ENCODE measurements at regions of chr19 and their contacts with region 1.

Region 1: DNA sequence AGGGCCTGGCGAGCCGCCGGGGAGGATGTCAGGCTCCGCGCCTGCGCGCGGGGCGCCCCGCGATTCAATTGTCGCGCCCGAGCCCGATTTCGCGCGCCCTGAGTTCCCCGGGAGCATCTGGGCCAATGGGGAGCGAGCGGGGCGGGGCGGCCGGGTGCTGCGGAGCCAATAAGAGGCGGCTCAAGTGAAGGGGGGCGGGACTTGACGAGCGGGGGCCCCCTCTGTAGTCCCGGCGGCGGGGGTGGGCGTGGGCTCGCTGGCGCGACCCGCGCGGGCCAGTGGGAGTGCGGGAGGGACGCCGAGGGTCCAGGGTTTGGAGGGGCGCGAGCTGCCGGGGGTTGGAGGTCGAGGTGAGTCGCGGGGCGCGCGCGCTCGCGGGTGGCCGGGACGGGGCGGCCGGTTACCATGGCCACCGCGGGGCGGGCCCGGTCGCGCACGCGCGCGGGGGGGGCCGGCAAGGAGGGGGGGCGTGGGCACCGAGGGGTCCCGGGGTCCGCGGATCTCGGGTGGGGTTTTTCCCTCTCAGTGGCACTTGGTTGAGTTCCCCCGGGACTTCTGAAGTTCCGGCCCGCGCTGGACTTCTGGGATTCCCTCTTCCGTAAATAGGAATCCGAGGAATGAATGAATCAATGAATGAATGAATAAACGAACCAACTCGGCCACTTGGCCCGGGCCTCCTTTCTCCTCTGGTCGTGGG is 744 bp downstream of the UHRF1 start:
- DNase-seq: no peak
- ATAC-seq: peak; percentile 89
- H3K4me3 ChIP-seq: peak overlapping the region; percentile 55 to 61
- H3K27ac ChIP-seq: peak overlapping the region; percentile 93
- H3K4me1 ChIP-seq: peaks cover 27% of the 10 kb centered on the region
- H3K27me3 ChIP-seq: no peaks in the 10 kb centered on the region
- CTCF ChIP-seq: no peak

Region 2: GRCh38 chr19:4861077-4861543 is 48.9 kb before region 1 on chr19:
- CTCF ChIA-PET with region 1: interaction called, 3 read pairs
- POLR2A ChIA-PET with region 1: interaction called, 17 read pairs
- in situ Hi-C with region 1: no loop called
- intact Hi-C with region 1: no loop called
- DNase-seq: no peak
- ATAC-seq: 0 out of 2 replicates have a peak, but pooled peaks have one; percentile 27
- H3K4me3 ChIP-seq: no peak overlapping the region
- H3K27ac ChIP-seq: no peak overlapping the region
- H3K4me1 ChIP-seq: no peaks in the 10 kb centered on the region
- H3K27me3 ChIP-seq: no peaks in the 10 kb centered on the region
- CTCF ChIP-seq: no peak

Region 3: DNA sequence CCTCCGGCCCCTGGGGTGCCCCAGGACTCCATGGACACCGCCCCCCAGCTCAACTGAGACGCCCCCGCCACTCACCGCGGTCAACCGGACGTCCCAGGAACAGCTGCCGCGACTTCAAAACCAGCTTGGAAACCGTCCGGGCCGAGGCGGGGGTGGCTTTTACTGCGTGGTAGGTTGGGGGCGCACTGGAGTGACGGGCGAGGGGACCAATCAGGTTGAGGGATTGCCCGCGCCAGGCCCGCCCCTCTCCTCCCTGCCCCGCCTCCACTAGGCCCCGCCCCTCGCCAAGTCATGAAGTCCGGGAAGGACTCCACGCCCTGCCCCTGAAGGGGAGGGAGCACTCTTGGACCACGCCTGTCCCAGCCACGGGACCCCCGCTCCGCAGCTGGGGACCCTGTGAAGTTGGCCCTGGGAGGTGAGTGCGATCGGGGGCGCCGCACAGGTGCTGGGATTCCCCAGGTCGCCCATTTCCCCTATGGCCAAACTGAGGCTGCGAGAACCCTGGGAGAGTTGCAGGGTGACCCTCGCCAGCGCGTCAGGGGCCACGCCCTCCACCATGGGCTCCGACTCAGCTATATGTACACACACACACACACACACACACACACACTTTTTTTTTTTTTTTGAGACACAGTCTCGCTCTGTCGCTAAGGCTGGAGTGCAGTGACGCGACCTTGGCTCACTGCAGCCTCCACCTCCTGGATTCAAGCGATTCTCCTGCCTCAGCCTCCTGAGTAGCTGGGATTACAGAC is 42.3 kb before region 1 on chr19 and contains the start of gene PLIN3:
- CTCF ChIA-PET with region 1: interaction called, 24 read pairs
- POLR2A ChIA-PET with region 1: interaction called, 5 read pairs
- in situ Hi-C with region 1: no loop called
- intact Hi-C with region 1: loop called (anchors 1 kb)
- DNase-seq: peak; percentile 76
- ATAC-seq: peak; percentile 88
- H3K4me3 ChIP-seq: peak within 1 kb of the TSS; percentile 75 to 86
- H3K27ac ChIP-seq: peak within 1 kb of the TSS; percentile 89
- H3K4me1 ChIP-seq: peaks cover 14% of the 10 kb centered on the region
- H3K27me3 ChIP-seq: no peaks in the 10 kb centered on the region
- CTCF ChIP-seq: no peak
- total RNA-seq, gene PLIN3: 157 TPM